IMR-90 (cell line): ENCODE measurements at regions of chr12 and their contacts with region 1.

Region 1: GRCh38 chr12:104108755-104109445 is 29.1 kb downstream of the NFYB start:
- DNase-seq: peak; percentile 87
- ATAC-seq: peak; percentile 96
- H3K4me3 ChIP-seq: no peak overlapping the region
- H3K27ac ChIP-seq: no peak overlapping the region
- H3K4me1 ChIP-seq: no peaks in the 10 kb centered on the region; the same call in 1 of the 2 replicates
- H3K27me3 ChIP-seq: no peaks in the 10 kb centered on the region
- CTCF ChIP-seq: peak; percentile 82
- POLR2A ChIP-seq: no peak
- RAD21 ChIP-seq: peak; percentile 73

Region 2: DNA sequence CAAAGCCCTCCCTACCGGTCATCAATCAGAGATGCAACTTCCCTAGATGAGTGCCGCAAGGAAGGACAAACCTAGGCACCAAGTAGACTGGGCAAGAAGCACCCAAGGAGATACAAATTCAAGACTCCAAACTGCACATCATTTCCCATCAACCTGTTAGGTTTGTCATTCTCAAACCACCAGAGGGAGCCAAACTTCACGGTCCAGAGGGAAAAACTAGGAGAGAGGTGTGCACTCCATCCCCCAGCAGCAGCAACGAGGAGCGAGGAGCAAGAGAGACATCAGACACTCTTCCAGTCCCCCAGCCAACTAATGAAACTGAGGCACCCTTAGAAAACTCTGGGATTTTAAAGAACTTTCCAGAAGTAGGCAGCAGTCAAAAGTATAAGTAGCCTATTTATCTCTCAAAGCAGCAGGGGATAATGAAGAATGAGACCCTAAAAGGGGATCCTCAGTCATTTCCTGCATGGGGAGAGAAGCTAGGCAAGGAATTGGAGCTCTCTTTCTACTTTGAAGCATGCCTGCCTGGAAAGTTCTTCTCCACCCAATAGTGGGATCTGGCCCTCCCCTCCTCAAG is 230.9 kb before region 1 on chr12:
- CTCF ChIA-PET with region 1: interaction called, 4 read pairs
- POLR2A ChIA-PET with region 1: no interaction called
- dilution Hi-C with region 1: no loop called
- in situ Hi-C with region 1: loop called (anchors 10 kb)
- intact Hi-C with region 1: loop called (anchors 1 kb)
- DNase-seq: peak; percentile 68
- ATAC-seq: peak; percentile 96
- H3K4me3 ChIP-seq: no peak overlapping the region
- H3K27ac ChIP-seq: no peak overlapping the region
- H3K4me1 ChIP-seq: no peaks in the 10 kb centered on the region
- H3K27me3 ChIP-seq: peaks cover 1% of the 10 kb centered on the region
- CTCF ChIP-seq: peak; percentile 82
- POLR2A ChIP-seq: no peak
- RAD21 ChIP-seq: peak; percentile 90

Region 3: GRCh38 chr12:103884316-103884715 is 224.6 kb before region 1 on chr12:
- CTCF ChIA-PET with region 1: no interaction called
- POLR2A ChIA-PET with region 1: no interaction called
- dilution Hi-C with region 1: no loop called
- in situ Hi-C with region 1: loop called (anchors 10 kb)
- intact Hi-C with region 1: loop called (anchors 2 kb)
- DNase-seq: peak; percentile 76
- ATAC-seq: peak; percentile 59; the same call in 1 of the 2 replicates
- H3K4me3 ChIP-seq: no peak overlapping the region
- H3K27ac ChIP-seq: no peak overlapping the region
- H3K4me1 ChIP-seq: no peaks in the 10 kb centered on the region
- H3K27me3 ChIP-seq: no peaks in the 10 kb centered on the region
- CTCF ChIP-seq: peak; percentile 72
- POLR2A ChIP-seq: no peak
- RAD21 ChIP-seq: peak; percentile 83

Region 4: GRCh38 chr12:103956516-103957027 is 152.3 kb before region 1 on chr12:
- CTCF ChIA-PET with region 1: interaction called, 3 read pairs
- POLR2A ChIA-PET with region 1: interaction called, 3 read pairs
- dilution Hi-C with region 1: no loop called
- in situ Hi-C with region 1: no loop called
- intact Hi-C with region 1: loop called (anchors 2 kb)
- DNase-seq: no peak
- ATAC-seq: peak; percentile 52
- H3K4me3 ChIP-seq: peak overlapping the region; percentile 72
- H3K27ac ChIP-seq: peak overlapping the region; percentile 90
- H3K4me1 ChIP-seq: peaks cover 3% of the 10 kb centered on the region; the same call in 1 of the 2 replicates
- H3K27me3 ChIP-seq: no peaks in the 10 kb centered on the region
- CTCF ChIP-seq: no peak
- POLR2A ChIP-seq: no peak
- RAD21 ChIP-seq: no peak

Region 5: DNA sequence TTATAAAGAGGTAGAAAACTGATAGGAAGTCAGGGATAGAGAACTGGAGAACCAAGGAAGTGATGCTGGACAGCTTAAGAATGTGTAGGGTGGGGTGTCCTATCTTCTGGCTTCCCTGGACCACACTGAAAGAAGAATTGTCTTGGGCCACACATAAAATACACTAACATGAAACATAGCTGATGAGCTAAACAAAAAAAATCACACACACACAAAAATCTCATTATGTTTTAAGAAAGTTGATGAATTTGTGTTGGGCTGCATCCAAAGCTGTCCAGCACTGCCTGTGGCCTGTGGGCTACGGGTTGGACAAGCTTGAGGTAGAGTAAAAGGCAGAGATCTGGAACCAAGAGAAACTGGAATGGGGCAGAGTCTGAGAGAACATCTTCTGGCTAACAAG is 66.3 kb before region 1 on chr12:
- CTCF ChIA-PET with region 1: no interaction called
- POLR2A ChIA-PET with region 1: no interaction called
- dilution Hi-C with region 1: no loop called
- in situ Hi-C with region 1: no loop called
- intact Hi-C with region 1: no loop called
- DNase-seq: no peak
- ATAC-seq: no peak
- H3K4me3 ChIP-seq: no peak overlapping the region
- H3K27ac ChIP-seq: no peak overlapping the region
- H3K4me1 ChIP-seq: peaks cover 6% of the 10 kb centered on the region; the same call in 1 of the 2 replicates
- H3K27me3 ChIP-seq: no peaks in the 10 kb centered on the region
- CTCF ChIP-seq: no peak
- POLR2A ChIP-seq: no peak
- RAD21 ChIP-seq: no peak

Region 6: GRCh38 chr12:104064031-104064822 is 44.7 kb before region 1 on chr12 and contains the start of gene HCFC2:
- CTCF ChIA-PET with region 1: interaction called, 6 read pairs
- POLR2A ChIA-PET with region 1: no interaction called
- dilution Hi-C with region 1: no loop called
- in situ Hi-C with region 1: no loop called
- intact Hi-C with region 1: loop called (anchors 2 kb)
- DNase-seq: peak; percentile 87
- ATAC-seq: peak; percentile 95
- H3K4me3 ChIP-seq: peak within 1 kb of the TSS; percentile 89
- H3K27ac ChIP-seq: peak within 1 kb of the TSS; percentile 98
- H3K4me1 ChIP-seq: peaks cover 2% of the 10 kb centered on the region
- H3K27me3 ChIP-seq: no peaks in the 10 kb centered on the region
- CTCF ChIP-seq: no peak
- POLR2A ChIP-seq: no peak
- RAD21 ChIP-seq: no peak
- total RNA-seq, gene HCFC2: 33.3 and 34.2 TPM in 2 replicates

Region 7: GRCh38 chr12:104094284-104094683 is 14.6 kb before region 1 on chr12:
- CTCF ChIA-PET with region 1: interaction called, 11 read pairs
- POLR2A ChIA-PET with region 1: no interaction called
- dilution Hi-C with region 1: no loop called
- in situ Hi-C with region 1: no loop called
- intact Hi-C with region 1: no loop called
- DNase-seq: peak; percentile 88
- ATAC-seq: peak; percentile 89
- H3K4me3 ChIP-seq: no peak overlapping the region
- H3K27ac ChIP-seq: peak overlapping the region; percentile 70; the same call in 1 of the 2 replicates
- H3K4me1 ChIP-seq: peaks cover 13% of the 10 kb centered on the region
- H3K27me3 ChIP-seq: no peaks in the 10 kb centered on the region
- CTCF ChIP-seq: no peak
- POLR2A ChIP-seq: no peak
- RAD21 ChIP-seq: no peak